GM12878 (cell line): ENCODE measurements at regions of chr2 and their contacts with region 1.

Region 1: GRCh38 chr2:230824406-230824978 is 40.2 kb upstream of the ITM2C start:
- DNase-seq: peak; percentile 45
- ATAC-seq: peak; percentile 88
- H3K4me3 ChIP-seq: no peak overlapping the region
- H3K27ac ChIP-seq: no peak overlapping the region
- H3K4me1 ChIP-seq: peaks cover 5% of the 10 kb centered on the region; the same call in 1 of the 2 replicates
- H3K27me3 ChIP-seq: no peaks in the 10 kb centered on the region
- CTCF ChIP-seq: peak; percentile 59 to 77 (median 62)
- EP300 ChIP-seq: no peak
- POLR2A ChIP-seq: no peak
- RAD21 ChIP-seq: peak; percentile 91

Region 2: GRCh38 chr2:230751062-230751461 is 73.4 kb before region 1 on chr2:
- CTCF ChIA-PET with region 1: no interaction called
- POLR2A ChIA-PET with region 1: no interaction called
- RAD21 ChIA-PET with region 1: no interaction called
- SMC1A ChIA-PET with region 1: no interaction called
- in situ Hi-C with region 1: no loop called
- intact Hi-C with region 1: no loop called
- DNase-seq: no peak
- ATAC-seq: peak; percentile 74
- H3K4me3 ChIP-seq: no peak overlapping the region
- H3K27ac ChIP-seq: no peak overlapping the region
- H3K4me1 ChIP-seq: no peaks in the 10 kb centered on the region
- H3K27me3 ChIP-seq: no peaks in the 10 kb centered on the region
- CTCF ChIP-seq: no peak
- EP300 ChIP-seq: no peak
- POLR2A ChIP-seq: no peak
- RAD21 ChIP-seq: no peak

Region 3: GRCh38 chr2:230842473-230842872 is 18.0 kb after region 1 on chr2:
- CTCF ChIA-PET with region 1: interaction called, 38 read pairs
- POLR2A ChIA-PET with region 1: interaction called, 5 read pairs
- RAD21 ChIA-PET with region 1: interaction called, 23 read pairs
- SMC1A ChIA-PET with region 1: interaction called, 11 read pairs
- in situ Hi-C with region 1: no loop called
- intact Hi-C with region 1: no loop called
- DNase-seq: no peak
- ATAC-seq: no peak
- H3K4me3 ChIP-seq: no peak overlapping the region
- H3K27ac ChIP-seq: no peak overlapping the region
- H3K4me1 ChIP-seq: peaks cover under 1% of the 10 kb centered on the region; the same call in 1 of the 2 replicates
- H3K27me3 ChIP-seq: peaks cover 0 to 3% of the 10 kb centered on the region in 2 experiments; a peak in 1 of 4 replicates
- CTCF ChIP-seq: no peak
- EP300 ChIP-seq: no peak
- POLR2A ChIP-seq: no peak
- RAD21 ChIP-seq: no peak

Region 4: GRCh38 chr2:230902180-230902899 is 77.8 kb after region 1 on chr2:
- CTCF ChIA-PET with region 1: interaction called, 8 read pairs
- POLR2A ChIA-PET with region 1: no interaction called
- RAD21 ChIA-PET with region 1: interaction called, 7 read pairs
- SMC1A ChIA-PET with region 1: interaction called, 4 read pairs
- in situ Hi-C with region 1: no loop called
- intact Hi-C with region 1: loop called (anchors 5 kb)
- DNase-seq: no peak
- ATAC-seq: peak; percentile 94
- H3K4me3 ChIP-seq: no peak overlapping the region
- H3K27ac ChIP-seq: no peak overlapping the region
- H3K4me1 ChIP-seq: peaks cover 14% of the 10 kb centered on the region
- H3K27me3 ChIP-seq: no peaks in the 10 kb centered on the region
- CTCF ChIP-seq: peak; percentile 98 to 99 (median 98); a peak in 5 of 6 replicates
- EP300 ChIP-seq: no peak
- POLR2A ChIP-seq: no peak
- RAD21 ChIP-seq: peak; percentile 99

Region 5: GRCh38 chr2:230913406-230914143 is 89.1 kb after region 1 on chr2:
- CTCF ChIA-PET with region 1: interaction called, 14 read pairs
- POLR2A ChIA-PET with region 1: no interaction called
- RAD21 ChIA-PET with region 1: interaction called, 4 read pairs
- SMC1A ChIA-PET with region 1: interaction called, 5 read pairs
- in situ Hi-C with region 1: no loop called
- intact Hi-C with region 1: no loop called
- DNase-seq: no peak
- ATAC-seq: peak; percentile 75
- H3K4me3 ChIP-seq: no peak overlapping the region
- H3K27ac ChIP-seq: peak overlapping the region; percentile 13; the same call in 1 of the 2 replicates
- H3K4me1 ChIP-seq: peaks cover 23% of the 10 kb centered on the region
- H3K27me3 ChIP-seq: no peaks in the 10 kb centered on the region
- CTCF ChIP-seq: peak; percentile 45 to 61 (median 60)
- EP300 ChIP-seq: no peak
- POLR2A ChIP-seq: no peak
- RAD21 ChIP-seq: peak; percentile 62

Region 6: GRCh38 chr2:230974096-230974913 is 149.8 kb after region 1 on chr2:
- CTCF ChIA-PET with region 1: no interaction called
- POLR2A ChIA-PET with region 1: no interaction called
- RAD21 ChIA-PET with region 1: no interaction called
- SMC1A ChIA-PET with region 1: no interaction called
- in situ Hi-C with region 1: no loop called
- intact Hi-C with region 1: no loop called
- DNase-seq: peak; percentile 94
- ATAC-seq: peak; percentile 86
- H3K4me3 ChIP-seq: no peak overlapping the region; the same call in 1 of the 2 replicates
- H3K27ac ChIP-seq: peak overlapping the region; percentile 97
- H3K4me1 ChIP-seq: peaks cover 67% of the 10 kb centered on the region
- H3K27me3 ChIP-seq: no peaks in the 10 kb centered on the region
- CTCF ChIP-seq: no peak
- EP300 ChIP-seq: peak; percentile 79 to 94
- POLR2A ChIP-seq: 0 out of 2 replicates have a peak, but pooled peaks have one; percentile 44
- RAD21 ChIP-seq: peak; percentile 35

Region 7: DNA sequence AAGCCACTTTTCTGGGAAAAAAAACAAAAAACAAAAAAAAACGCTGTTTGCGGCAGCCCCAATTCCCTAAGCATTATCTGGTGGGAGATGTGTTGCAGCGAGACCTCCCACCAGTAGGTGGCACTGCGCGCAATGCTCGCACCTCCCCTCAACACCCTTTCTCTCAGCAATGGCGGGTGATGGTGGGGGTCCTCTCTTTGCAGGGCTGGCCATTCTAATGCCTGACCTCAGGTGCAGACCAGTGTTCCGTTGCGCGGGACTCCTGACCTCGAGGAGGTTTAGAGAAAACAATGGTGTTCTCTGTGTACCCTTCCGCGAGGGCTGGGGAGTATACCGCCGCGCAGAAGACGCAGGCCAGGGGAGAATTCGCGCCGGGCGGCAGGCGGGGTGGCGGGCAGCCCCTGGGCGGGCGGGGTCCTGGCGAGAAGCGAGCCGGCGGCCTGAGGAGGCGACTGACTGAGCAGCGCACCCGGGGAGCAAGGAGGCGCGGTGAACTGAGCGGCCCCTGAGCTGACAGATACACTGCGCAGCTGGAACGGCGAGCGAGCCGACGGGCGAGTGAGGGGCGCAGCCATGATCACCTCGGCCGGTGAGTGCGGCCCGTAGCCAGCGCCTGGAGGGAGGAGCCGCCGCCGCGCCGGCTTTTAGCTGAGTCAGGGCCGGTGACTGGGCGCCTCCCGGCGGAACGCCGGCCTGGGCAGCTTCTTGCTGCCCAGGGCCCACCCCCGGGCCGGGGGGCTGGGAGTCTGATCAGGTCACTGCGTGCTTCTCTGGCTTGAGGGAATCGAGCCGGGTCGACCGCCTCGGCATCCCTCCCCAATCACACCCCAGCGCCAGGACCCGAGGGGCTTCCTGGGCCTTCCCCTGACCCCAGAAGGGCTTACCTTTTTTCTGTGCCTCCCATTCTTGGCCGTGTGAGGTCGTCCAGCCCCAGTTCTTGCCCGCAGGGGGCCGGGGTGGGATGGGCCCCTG is 232.2 kb after region 1 on chr2 and contains the start of gene PSMD1:
- CTCF ChIA-PET with region 1: interaction called, 29 read pairs
- POLR2A ChIA-PET with region 1: no interaction called
- RAD21 ChIA-PET with region 1: interaction called, 15 read pairs
- SMC1A ChIA-PET with region 1: interaction called, 11 read pairs
- in situ Hi-C with region 1: no loop called
- intact Hi-C with region 1: loop called (anchors 1 kb)
- DNase-seq: peak; percentile 80
- ATAC-seq: peak; percentile 87
- H3K4me3 ChIP-seq: peak within 1 kb of the TSS; percentile 90
- H3K27ac ChIP-seq: peak within 1 kb of the TSS; percentile 92
- H3K4me1 ChIP-seq: peaks cover 8% of the 10 kb centered on the region; the same call in 1 of the 2 replicates
- H3K27me3 ChIP-seq: no peaks in the 10 kb centered on the region
- CTCF ChIP-seq: peak; percentile 89 to 98 (median 94)
- EP300 ChIP-seq: 0 out of 4 replicates have a peak, but pooled peaks of 1 of the 2 experiments have one; percentile 10
- POLR2A ChIP-seq: peak; percentile 92
- RAD21 ChIP-seq: no peak
- polyA plus RNA-seq, gene PSMD1: 96.4 to 220 TPM

Region 8: DNA sequence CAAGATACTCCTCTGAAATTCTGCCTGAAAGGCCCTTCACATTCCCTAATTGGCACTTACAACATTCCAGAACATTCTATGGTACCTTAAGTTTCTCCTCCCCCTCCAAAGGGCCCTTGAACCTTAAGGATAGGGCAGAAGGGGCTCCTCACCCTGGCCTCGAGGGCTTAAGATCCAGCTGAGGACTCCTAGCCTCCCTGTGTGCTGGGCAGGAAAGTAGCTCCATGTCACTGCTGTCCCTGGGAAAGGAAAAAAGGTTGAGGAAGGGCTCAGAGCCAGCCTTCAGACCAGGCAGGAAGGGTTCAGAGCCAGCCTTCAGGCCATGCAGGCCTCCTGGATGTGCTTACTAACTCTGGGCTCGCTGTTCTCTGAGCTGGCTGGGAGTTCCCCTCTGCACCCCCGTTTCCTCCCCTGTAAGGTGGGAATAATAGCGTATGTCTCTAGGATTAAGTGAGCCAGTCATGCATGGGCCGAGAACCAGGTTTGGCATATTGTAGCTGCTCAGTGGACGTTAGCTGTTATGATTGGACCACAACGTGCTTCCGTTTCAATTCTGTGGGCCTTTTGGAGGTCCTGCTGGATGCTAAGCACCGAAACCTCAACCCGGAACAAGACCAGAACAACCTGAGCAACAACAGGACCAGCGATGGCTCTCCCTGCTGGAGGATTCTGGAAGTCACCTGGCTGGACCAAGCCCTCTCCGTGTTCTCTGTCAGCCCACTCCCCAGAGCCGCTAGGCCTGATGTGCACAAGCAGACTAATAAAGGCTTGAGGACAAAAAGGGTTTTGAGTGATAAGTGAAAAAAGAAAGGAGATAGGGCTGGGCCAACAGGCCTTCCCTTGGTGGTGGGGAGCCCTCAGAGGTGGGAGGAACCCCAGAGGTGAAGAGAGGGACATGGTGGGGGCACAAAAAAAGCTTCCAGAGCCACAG is 570.0 kb after region 1 on chr2:
- CTCF ChIA-PET with region 1: interaction called, 3 read pairs
- POLR2A ChIA-PET with region 1: no interaction called
- RAD21 ChIA-PET with region 1: no interaction called
- SMC1A ChIA-PET with region 1: no interaction called
- in situ Hi-C with region 1: no loop called
- intact Hi-C with region 1: loop called (anchors 10 kb)
- DNase-seq: peak; percentile 87
- ATAC-seq: peak; percentile 66
- H3K4me3 ChIP-seq: peak overlapping the region; percentile 65
- H3K27ac ChIP-seq: peak overlapping the region; percentile 95
- H3K4me1 ChIP-seq: peaks cover 58% of the 10 kb centered on the region
- H3K27me3 ChIP-seq: no peaks in the 10 kb centered on the region
- CTCF ChIP-seq: peak; percentile 52 to 67 (median 61)
- EP300 ChIP-seq: peak in 1 of 2 experiments; percentile 53; a peak in 1 of 4 replicates
- POLR2A ChIP-seq: peak; percentile 76
- RAD21 ChIP-seq: peak; percentile 47